Breast epithelium (tissue), 4 donors: ENCODE measurements at regions of chr5 and their contacts with region 1.

Region 1: GRCh38 chr5:76896196-76896595 is 46.4 kb downstream of the S100Z start:
- DNase-seq: no peak
- H3K4me3 ChIP-seq: no peak overlapping the region
- H3K27ac ChIP-seq: no peak overlapping the region
- H3K4me1 ChIP-seq: no peaks in the 10 kb centered on the region
- H3K27me3 ChIP-seq: no peaks in the 10 kb centered on the region
- CTCF ChIP-seq: no peak
- POLR2A ChIP-seq: no peak

Region 2: GRCh38 chr5:75890546-75890945 is 1005.6 kb before region 1 on chr5:
- intact Hi-C with region 1: no loop called
- DNase-seq: no peak
- H3K4me3 ChIP-seq: no peak overlapping the region
- H3K27ac ChIP-seq: no peak overlapping the region
- H3K4me1 ChIP-seq: no peaks in the 10 kb centered on the region
- H3K27me3 ChIP-seq: no peaks in the 10 kb centered on the region
- CTCF ChIP-seq: no peak
- POLR2A ChIP-seq: no peak

Region 3: GRCh38 chr5:76325876-76326491 is 570.2 kb before region 1 on chr5:
- intact Hi-C with region 1: loop called (anchors 5 kb)
- DNase-seq: no peak
- H3K4me3 ChIP-seq: no peak overlapping the region
- H3K27ac ChIP-seq: peak overlapping the region in 1 of 2 donors; percentile 22
- H3K4me1 ChIP-seq: no peaks in the 10 kb centered on the region
- H3K27me3 ChIP-seq: no peaks in the 10 kb centered on the region
- CTCF ChIP-seq: no peak
- POLR2A ChIP-seq: no peak